ENCODE measurements at regions of chr6 and their contacts with region 1.

Region 1: GRCh38 chr6:6057424-6058053 is 50.8 kb upstream of the NRN1 start:
- ATAC-seq: peak in 6 of 8 experiments; percentile 49 to 87 (median 71)
- H3K4me3 ChIP-seq: no peak overlapping the region
- H3K27ac ChIP-seq: no peak overlapping the region
- H3K4me1 ChIP-seq: no peaks in the 10 kb centered on the region

Region 2: DNA sequence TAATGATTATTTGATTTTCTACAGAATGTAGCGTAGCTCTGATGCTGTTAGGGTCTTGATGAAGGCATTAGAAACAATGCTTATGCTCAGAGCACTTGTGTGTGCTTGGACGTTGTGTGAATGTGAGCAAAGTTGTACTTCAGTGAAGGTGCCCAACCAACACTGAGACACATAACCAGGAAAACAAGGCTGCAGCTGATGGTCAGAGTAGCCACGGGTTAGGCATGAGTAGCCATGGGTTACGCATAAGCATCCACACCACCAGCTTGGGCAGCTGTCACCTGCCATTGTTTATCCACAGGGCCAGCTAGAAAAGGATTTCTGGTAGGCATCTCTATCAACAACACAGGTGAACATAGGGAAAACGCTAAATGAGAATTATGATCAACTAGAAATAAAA is 377.4 kb before region 1 on chr6:
- in situ Hi-C with region 1: no loop called
- ATAC-seq: peak in 5 of 8 experiments; percentile 30 to 78 (median 41)
- H3K4me3 ChIP-seq: no peak overlapping the region
- H3K27ac ChIP-seq: no peak overlapping the region
- H3K4me1 ChIP-seq: peaks cover 18 to 27% of the 10 kb centered on the region in 2 donors

Region 3: DNA sequence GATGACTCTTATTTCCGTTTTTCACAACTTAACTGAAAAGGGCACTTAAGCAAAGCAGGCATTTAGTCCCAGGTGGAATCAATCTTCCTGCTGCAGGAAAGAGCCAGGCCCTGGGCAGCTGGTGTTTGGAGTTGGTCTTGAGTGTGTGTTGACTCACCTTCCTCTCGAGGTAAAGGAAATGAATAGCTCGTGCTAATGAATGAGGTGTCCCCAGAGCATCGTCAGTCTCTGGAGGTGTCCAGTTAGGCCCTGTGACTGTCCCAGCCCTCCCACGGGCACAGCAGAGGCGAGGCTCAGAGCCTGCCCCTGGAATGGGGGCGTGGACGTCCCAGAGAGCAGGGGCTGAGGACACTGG is 328.5 kb before region 1 on chr6:
- in situ Hi-C with region 1: no loop called
- ATAC-seq: peak in 5 of 8 experiments; percentile 65 to 90 (median 76)
- H3K4me3 ChIP-seq: no peak overlapping the region
- H3K27ac ChIP-seq: peak overlapping the region in 1 of 2 donors; percentile 41
- H3K4me1 ChIP-seq: peaks cover 38 to 42% of the 10 kb centered on the region in 2 donors

Region 4: GRCh38 chr6:6515691-6516607 is 458.4 kb after region 1 on chr6:
- in situ Hi-C with region 1: loop called in 1 of 9 experiments (anchors 25 kb)
- ATAC-seq: no peak
- H3K4me3 ChIP-seq: no peak overlapping the region
- H3K27ac ChIP-seq: no peak overlapping the region
- H3K4me1 ChIP-seq: no peaks in the 10 kb centered on the region

Region 5: GRCh38 chr6:6547110-6547879 is 489.8 kb after region 1 on chr6:
- in situ Hi-C with region 1: loop called in 3 of 9 experiments (anchors 25 kb)
- ATAC-seq: peak; percentile 88 to 100 (median 96)
- H3K4me3 ChIP-seq: peak overlapping the region in 4 of 5 donors; percentile 9 to 26 (median 20)
- H3K27ac ChIP-seq: no peak overlapping the region
- H3K4me1 ChIP-seq: peaks cover 12 to 17% of the 10 kb centered on the region in 2 donors